RWPE1 (cell line): ENCODE measurements at regions of chr5 and their contacts with region 1.

Region 1: GRCh38 chr5:180484813-180485212 is 9.4 kb upstream of the CNOT6 start:
- DNase-seq: no peak
- H3K27ac ChIP-seq: no peak overlapping the region
- CTCF ChIP-seq: no peak

Region 2: DNA sequence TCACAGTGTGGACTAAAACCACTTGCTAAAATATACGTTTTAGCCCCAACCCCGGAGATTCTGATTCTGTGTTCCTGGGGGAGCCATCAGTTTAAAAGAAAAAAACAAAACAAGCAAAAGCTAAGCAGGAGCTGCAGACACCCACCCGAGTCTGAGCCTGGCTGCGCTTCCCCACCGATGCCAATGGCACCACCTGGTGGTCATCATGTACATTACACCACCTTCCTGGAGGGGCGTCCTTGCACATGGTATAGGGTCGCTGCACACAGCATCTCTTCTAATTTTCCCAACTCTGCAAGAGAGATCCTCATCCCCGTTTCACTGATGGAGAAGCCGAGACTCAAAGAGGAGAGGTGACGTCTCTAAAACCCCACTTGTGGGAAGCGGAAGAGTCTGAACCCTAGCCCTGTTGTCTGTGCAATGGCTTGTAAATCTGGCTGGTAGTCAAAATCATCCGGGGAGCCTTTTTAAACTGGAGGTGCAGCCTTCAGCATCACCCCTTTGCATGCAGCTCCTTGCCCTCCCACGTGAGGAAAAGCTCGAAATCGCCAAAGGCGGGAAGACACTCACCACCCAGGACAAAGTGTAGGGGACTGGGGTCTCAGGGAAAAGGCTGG is 13.7 kb before region 1 on chr5:
- CTCF ChIA-PET with region 1: interaction called, 12 read pairs
- POLR2A ChIA-PET with region 1: no interaction called
- DNase-seq: peak; percentile 72
- H3K27ac ChIP-seq: no peak overlapping the region
- CTCF ChIP-seq: peak; percentile 98

Region 3: GRCh38 chr5:180523629-180524466 is 39.0 kb after region 1 on chr5:
- CTCF ChIA-PET with region 1: no interaction called
- POLR2A ChIA-PET with region 1: no interaction called
- DNase-seq: no peak
- H3K27ac ChIP-seq: no peak overlapping the region
- CTCF ChIP-seq: no peak